Sigmoid colon (tissue), 7 donors: ENCODE measurements at regions of chr19 and their contacts with region 1.

Region 1: DNA sequence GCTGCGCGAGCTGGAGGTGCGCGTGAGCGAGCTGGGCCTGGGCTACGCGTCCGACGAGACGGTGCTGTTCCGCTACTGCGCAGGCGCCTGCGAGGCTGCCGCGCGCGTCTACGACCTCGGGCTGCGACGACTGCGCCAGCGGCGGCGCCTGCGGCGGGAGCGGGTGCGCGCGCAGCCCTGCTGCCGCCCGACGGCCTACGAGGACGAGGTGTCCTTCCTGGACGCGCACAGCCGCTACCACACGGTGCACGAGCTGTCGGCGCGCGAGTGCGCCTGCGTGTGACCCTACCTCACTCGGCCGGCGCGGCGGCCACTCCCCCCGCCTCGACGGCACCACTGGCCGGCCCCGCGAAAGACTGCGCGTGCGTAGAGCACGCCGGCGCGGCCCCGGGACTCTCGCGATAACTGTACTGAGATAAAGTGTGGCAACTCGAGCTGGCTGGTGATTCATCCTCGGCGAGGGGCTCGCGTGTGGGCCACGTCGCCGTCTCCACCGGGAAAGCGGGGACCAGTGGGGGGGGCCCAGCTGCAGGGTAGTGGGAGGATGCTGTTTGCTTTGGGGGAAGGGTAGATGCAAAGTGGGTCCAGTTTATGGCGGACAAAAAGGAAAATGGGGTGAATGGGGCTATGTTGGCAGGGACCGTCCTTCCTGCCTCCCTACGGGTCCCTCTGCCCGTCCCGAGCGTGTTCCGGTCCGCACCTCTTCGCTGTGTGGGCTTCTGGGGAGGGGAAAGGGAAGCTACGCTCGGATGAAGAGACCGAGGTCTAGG is 11.4 kb downstream of the FUT6 start:
- DNase-seq: peak; percentile 96
- H3K4me3 ChIP-seq: peak overlapping the region; percentile 38 to 57 (median 48)
- H3K27ac ChIP-seq: peak overlapping the region; percentile 87 to 96 (median 92)
- H3K4me1 ChIP-seq: peaks cover 0 to 35% (median 33%) of the 10 kb centered on the region in 4 donors
- H3K27me3 ChIP-seq: peaks cover 0 to 5% (median 0%) of the 10 kb centered on the region in 3 donors
- CTCF ChIP-seq: no peak
- EP300 ChIP-seq: peak in 1 of 4 donors; percentile 53
- POLR2A ChIP-seq: peak; percentile 80 to 95

Region 2: DNA sequence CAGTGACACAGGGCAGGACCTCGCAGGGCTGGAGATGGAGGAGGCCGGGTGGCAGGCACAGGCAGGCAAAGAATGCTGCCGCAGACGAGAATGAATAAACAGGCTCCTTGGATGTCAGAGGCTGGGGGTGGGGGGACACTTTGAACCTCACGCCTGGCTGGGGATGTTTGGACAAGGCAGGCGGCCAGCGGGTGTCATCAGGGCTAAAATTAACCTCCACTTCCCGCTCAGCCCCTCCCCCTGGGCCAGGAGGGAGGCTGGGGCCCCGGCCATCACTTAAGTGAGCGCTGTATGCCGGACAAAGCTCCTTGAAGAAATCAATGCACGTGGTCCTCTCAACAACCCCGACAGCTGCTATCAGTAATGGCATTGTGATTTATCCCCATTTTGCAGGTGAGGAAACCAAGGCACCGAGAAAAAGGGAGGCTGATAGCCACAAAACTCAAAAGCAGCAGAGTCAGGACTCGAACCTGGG is 52.6 kb after region 1 on chr19:
- intact Hi-C with region 1: loop called (anchors 2 kb)
- DNase-seq: peak; percentile 97
- H3K4me3 ChIP-seq: no peak overlapping the region
- H3K27ac ChIP-seq: peak overlapping the region; percentile 79 to 94 (median 84)
- H3K4me1 ChIP-seq: peaks cover 0 to 64% (median 45%) of the 10 kb centered on the region in 4 donors
- H3K27me3 ChIP-seq: no peaks in the 10 kb centered on the region
- CTCF ChIP-seq: no peak
- EP300 ChIP-seq: peak in 3 of 4 donors; percentile 64 to 88 (median 80)
- POLR2A ChIP-seq: no peak

Region 3: GRCh38 chr19:5891938-5892771 is 64.1 kb after region 1 on chr19:
- intact Hi-C with region 1: loop called (anchors 2 kb)
- DNase-seq: no peak
- H3K4me3 ChIP-seq: peak overlapping the region in 1 of 4 donors; percentile 5
- H3K27ac ChIP-seq: peak overlapping the region in 2 of 4 donors; percentile 83 to 87
- H3K4me1 ChIP-seq: peaks cover 0 to 38% (median 35%) of the 10 kb centered on the region in 4 donors
- H3K27me3 ChIP-seq: no peaks in the 10 kb centered on the region
- CTCF ChIP-seq: peak; percentile 81 to 93 (median 86)
- EP300 ChIP-seq: no peak
- POLR2A ChIP-seq: no peak